ENCODE measurements at regions of chr20 and their contacts with region 1.

Region 1: GRCh38 chr20:35303735-35304491 is 11.7 kb upstream of the FAM83C start:
- DNase-seq: peak; percentile 51 to 90 (median 78)
- H3K4me3 ChIP-seq: no peak overlapping the region
- H3K27ac ChIP-seq: no peak overlapping the region
- H3K27me3 ChIP-seq: no peaks in the 10 kb centered on the region
- CTCF ChIP-seq: peak; percentile 73 to 96 (median 90)

Region 2: DNA sequence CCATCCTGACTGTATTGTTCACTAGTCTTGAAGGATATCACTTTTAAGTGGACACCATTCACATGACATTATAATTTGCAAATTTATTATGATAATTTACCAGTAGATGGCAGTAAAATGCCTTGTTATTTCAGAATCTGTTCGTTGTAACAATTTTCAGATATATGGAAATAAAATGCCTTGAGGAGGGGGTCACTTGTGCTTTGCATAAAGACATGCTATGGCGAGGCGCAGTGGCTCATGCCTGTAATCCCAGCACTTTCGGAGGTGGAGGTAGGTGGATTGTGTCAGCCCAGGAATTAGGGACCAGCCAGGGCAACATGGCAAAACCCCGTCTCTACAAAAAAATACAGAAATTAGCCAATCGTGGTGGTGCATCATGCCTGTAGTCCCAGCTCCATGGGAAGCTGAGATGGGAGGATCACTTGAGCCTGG is 469.4 kb before region 1 on chr20:
- intact Hi-C with region 1: loop called in 1 of 2 experiments (anchors 10 kb)
- DNase-seq: no peak
- H3K4me3 ChIP-seq: peak overlapping the region in 42 of 59 donors; percentile 1 to 55 (median 32)
- H3K27ac ChIP-seq: peak overlapping the region in 3 of 59 donors; percentile 18 to 59 (median 45)
- H3K27me3 ChIP-seq: no peaks in the 10 kb centered on the region
- CTCF ChIP-seq: peak; percentile 33 to 78 (median 59)

Region 3: GRCh38 chr20:35277531-35278395 is 26.1 kb before region 1 on chr20 and contains the start of gene MMP24OS:
- intact Hi-C with region 1: no loop called
- DNase-seq: peak; percentile 69 to 94 (median 88)
- H3K4me3 ChIP-seq: peak within 1 kb of the TSS; percentile 55 to 92 (median 82)
- H3K27ac ChIP-seq: peak within 1 kb of the TSS; percentile 59 to 98 (median 92)
- H3K27me3 ChIP-seq: no peaks in the 10 kb centered on the region
- CTCF ChIP-seq: peak in 22 of 56 donors; percentile 2 to 39 (median 14)
- total RNA-seq, gene MMP24OS: 55.0 to 112 (median 79.5) TPM

Region 4: DNA sequence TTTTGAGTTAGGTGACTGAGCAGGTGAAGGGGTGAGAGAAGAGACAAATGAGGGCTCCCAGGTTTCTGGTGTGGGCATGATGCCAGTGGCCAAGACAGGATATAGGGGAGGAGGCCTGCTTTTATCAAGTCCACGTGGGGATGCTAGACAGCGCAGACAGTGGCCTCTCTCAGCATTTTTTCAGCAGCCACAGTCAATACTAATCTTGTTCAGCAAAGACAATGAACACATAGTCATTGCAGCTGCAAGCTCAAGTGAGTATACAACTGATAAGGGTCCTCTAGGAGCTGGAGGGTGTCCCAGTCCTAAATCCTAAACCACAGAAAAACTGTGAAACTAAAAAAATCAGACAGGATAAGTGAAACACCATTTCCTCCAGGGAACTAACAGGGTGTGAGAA is 59.3 kb after region 1 on chr20:
- intact Hi-C with region 1: loop called in 1 of 2 experiments (anchors 5 kb)
- DNase-seq: peak in 2 of 10 donors; percentile 45 to 48
- H3K4me3 ChIP-seq: no peak overlapping the region
- H3K27ac ChIP-seq: no peak overlapping the region
- H3K27me3 ChIP-seq: no peaks in the 10 kb centered on the region
- CTCF ChIP-seq: peak in 2 of 56 donors; percentile 21 to 31

Region 5: DNA sequence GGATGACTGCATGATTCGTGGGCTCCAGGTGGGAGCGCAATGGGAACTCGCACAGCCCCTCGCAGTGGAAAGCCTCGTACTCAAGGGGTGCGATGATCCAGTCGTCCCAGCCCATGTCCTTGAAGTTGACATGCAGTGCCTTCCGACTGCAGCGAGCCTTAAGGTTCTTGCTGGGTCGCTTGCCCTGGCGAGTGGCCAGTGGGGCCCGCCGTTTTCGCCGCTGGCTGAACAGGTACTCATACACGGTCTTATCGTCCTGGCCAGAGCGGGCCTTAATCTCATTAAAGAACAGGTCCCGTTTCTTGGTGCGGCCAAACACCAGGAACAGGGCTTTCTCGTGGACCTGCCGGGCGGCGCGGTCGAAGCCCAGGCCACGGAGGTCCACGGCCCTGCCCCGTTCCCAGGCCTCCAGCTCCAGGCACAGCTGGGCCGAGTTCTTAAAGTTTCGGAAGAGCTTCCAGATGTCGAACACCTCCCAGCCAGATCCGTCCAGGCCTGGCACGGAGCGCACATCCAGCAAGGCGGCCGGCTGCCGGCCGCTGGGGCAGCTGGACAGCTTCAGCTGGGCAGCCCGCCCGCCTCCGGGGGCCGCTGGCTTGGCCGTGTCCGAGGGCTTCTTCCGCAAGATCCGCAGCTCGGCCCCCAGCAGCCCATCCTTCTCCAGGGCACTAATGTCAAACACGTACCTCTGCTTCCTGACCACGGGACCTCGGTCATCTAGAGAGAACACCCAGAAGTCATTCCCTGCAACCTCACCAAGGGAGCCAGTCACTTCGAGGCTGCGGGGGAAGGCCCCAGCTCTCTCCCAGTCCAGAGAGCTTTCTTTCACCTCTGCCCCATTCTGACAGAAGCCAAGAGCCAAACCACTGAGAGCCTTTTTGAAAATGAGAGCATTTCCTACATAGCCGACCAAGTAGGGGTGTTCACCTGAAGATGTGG is 130.4 kb after region 1 on chr20:
- intact Hi-C with region 1: loop called in 1 of 2 experiments (anchors 5 kb)
- DNase-seq: no peak
- H3K4me3 ChIP-seq: no peak overlapping the region
- H3K27ac ChIP-seq: no peak overlapping the region
- H3K27me3 ChIP-seq: no peaks in the 10 kb centered on the region
- CTCF ChIP-seq: no peak

Region 6: GRCh38 chr20:35447082-35447789 is 143.3 kb after region 1 on chr20:
- intact Hi-C with region 1: loop called in 1 of 2 experiments (anchors 5 kb)
- DNase-seq: peak; percentile 68 to 91 (median 86)
- H3K4me3 ChIP-seq: peak overlapping the region in 54 of 59 donors; percentile 8 to 61 (median 39)
- H3K27ac ChIP-seq: no peak overlapping the region
- H3K27me3 ChIP-seq: peaks cover 0 to 4% (median 0%) of the 10 kb centered on the region in 45 donors
- CTCF ChIP-seq: peak; percentile 69 to 96 (median 90)